OCI-LY7 (cell line): ENCODE measurements at regions of chr2 and their contacts with region 1.

Region 1: DNA sequence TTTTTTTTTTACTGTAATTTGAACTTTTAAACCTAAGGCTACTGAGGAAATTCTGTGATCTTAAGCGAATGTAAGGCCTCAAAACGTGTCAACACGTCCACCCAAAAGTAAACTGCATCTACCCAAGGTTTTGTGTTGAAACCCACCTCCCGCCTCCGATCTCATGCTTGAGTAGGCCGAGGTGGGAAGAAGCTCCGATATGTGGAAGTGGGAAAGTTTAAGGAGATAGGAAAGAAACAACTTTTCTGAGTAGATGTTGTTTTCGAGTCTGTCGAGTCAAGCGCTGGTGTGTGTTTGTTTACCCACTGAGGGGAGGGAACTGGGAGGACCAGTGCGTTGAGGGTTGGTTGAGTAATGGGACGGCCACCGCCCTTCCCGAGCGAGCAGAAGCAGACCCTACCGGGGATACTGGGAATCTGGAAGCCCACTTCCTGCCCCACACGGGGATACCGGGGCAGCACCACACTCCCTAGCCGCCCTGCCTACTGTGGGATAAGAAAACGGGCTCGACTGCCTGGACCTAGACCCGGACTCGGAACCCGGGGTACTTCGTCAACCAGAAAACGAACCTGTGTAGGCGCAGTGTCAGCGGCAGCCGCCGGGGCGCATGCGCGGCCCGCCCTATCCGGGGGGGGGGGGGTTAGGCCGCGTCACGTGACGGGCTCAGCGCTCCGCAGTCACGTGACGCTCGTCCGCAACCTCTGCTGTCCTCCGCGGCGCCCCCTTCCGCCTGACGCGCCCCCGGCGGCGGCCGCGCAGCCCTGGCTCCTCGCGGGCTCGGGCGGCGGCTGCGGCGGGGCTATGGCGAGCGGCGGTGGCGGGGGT is at the start of gene RETREG2:
- DNase-seq: peak; percentile 95
- H3K4me3 ChIP-seq: peak within 1 kb of the TSS; percentile 88
- H3K27ac ChIP-seq: peak within 1 kb of the TSS; percentile 92
- H3K4me1 ChIP-seq: peaks cover 18% of the 10 kb centered on the region
- CTCF ChIP-seq: peak; percentile 57
- total RNA-seq, gene RETREG2: 44.9 and 59.1 TPM in 2 replicates

Region 2: DNA sequence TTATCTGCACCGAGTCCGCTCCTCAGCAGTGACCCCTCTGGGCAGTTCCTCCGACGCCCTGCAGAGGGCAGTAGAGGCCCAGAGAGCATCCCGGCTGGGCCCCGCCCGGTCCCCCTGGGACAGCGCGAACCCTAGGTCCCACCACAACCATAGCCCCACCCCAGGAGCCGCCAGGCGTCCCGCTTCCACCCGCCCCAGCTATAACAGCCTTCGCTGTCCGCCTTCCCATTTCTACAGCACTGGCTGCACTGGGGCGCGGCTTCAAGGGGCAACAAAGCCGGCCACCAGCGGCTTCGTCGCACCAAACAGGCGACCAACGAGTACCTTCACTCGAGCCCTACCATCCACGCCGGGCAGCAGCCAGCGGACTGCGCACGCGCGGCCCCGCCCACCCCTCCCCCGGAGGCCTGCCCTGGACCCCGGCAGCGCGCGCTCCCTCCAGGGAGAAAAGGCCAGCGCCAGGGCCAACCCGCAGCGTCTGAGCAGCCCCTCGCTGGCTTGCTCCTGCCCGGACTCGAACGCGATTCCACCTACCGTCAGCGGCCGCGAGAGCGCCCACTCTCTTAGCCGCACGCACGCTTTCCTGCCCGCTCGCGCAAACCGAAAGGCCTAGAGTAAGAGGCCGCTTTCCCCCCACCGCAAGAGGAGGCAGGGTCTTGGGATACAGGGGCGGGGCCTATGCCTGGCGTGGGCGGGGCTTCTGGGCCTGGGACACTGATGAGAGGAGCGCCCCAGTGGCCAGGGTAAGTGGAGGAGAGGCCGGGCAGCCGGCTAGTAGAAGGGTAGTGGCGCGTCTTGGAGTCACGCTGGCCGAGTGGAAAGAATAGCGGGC is 17.4 kb before region 1 on chr2 and contains the start of gene NHEJ1:
- CTCF ChIA-PET with region 1: interaction called, 4 read pairs
- POLR2A ChIA-PET with region 1: no interaction called
- intact Hi-C with region 1: loop called (anchors 1 kb)
- DNase-seq: peak; percentile 91
- H3K4me3 ChIP-seq: peak within 1 kb of the TSS; percentile 73
- H3K27ac ChIP-seq: peak within 1 kb of the TSS; percentile 68
- H3K4me1 ChIP-seq: peaks cover 11% of the 10 kb centered on the region
- CTCF ChIP-seq: peak; percentile 94
- total RNA-seq, gene NHEJ1: 12.7 and 14.9 TPM in 2 replicates

Region 3: GRCh38 chr2:219229305-219230058 is 51.7 kb after region 1 on chr2 and contains the starts of genes ANKZF1 and ATG9A:
- CTCF ChIA-PET with region 1: no interaction called
- POLR2A ChIA-PET with region 1: interaction called, 4 read pairs
- intact Hi-C with region 1: loop called (anchors 1 kb)
- DNase-seq: peak; percentile 99
- H3K4me3 ChIP-seq: peak within 1 kb of the TSS; percentile 87
- H3K27ac ChIP-seq: peak within 1 kb of the TSS; percentile 76
- H3K4me1 ChIP-seq: peaks cover 16% of the 10 kb centered on the region
- CTCF ChIP-seq: no peak
- total RNA-seq, gene ANKZF1: 57.8 and 91.0 TPM in 2 replicates
- total RNA-seq, gene ATG9A: 22.2 and 27.7 TPM in 2 replicates

Region 4: GRCh38 chr2:219253753-219254590 is 76.2 kb after region 1 on chr2 and contains the start of gene TUBA4A:
- CTCF ChIA-PET with region 1: no interaction called
- POLR2A ChIA-PET with region 1: interaction called, 17 read pairs
- intact Hi-C with region 1: loop called (anchors 2 kb)
- DNase-seq: peak; percentile 93
- H3K4me3 ChIP-seq: peak within 1 kb of the TSS; percentile 87
- H3K27ac ChIP-seq: peak within 1 kb of the TSS; percentile 96
- H3K4me1 ChIP-seq: peaks cover 47% of the 10 kb centered on the region
- CTCF ChIP-seq: no peak
- total RNA-seq, gene TUBA4A: 62.8 and 96.0 TPM in 2 replicates

Region 5: GRCh38 chr2:219388127-219388844 is 210.5 kb after region 1 on chr2:
- CTCF ChIA-PET with region 1: no interaction called
- POLR2A ChIA-PET with region 1: no interaction called
- intact Hi-C with region 1: loop called (anchors 5 kb)
- DNase-seq: peak; percentile 95
- H3K4me3 ChIP-seq: peak overlapping the region; percentile 59
- H3K27ac ChIP-seq: no peak overlapping the region
- H3K4me1 ChIP-seq: peaks cover 15% of the 10 kb centered on the region
- CTCF ChIP-seq: peak; percentile 74